ENCODE measurements at regions of chr16 and their contacts with region 1.

Region 1: DNA sequence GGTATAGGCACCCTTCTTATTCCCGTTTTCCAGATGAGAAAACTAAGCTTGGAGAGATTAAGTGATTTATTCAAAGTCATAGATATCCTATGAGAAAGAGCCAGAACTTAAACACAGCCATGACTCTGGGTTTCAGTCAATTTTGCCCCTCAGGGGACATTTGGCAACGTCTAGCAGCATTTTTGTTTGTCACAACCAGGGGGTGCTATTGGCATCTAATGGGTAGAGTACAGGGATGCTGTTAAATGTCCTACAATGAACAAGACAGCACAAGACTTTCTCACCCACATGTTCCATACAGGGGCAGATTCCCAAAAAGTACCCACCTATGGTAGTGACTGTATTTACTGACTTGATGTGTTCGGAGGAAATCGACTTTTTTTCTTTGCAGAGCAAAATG is 4.8 kb upstream of the SHISA9 start:
- DNase-seq: no peak
- H3K4me3 ChIP-seq: no peak overlapping the region
- H3K27ac ChIP-seq: no peak overlapping the region
- H3K4me1 ChIP-seq: no peaks in the 10 kb centered on the region
- H3K27me3 ChIP-seq: peaks cover 40% of the 10 kb centered on the region
- CTCF ChIP-seq: peak in 4 of 5 experiments; percentile 24 to 50 (median 28)
- EP300 ChIP-seq: no peak
- POLR2A ChIP-seq: no peak

Region 2: DNA sequence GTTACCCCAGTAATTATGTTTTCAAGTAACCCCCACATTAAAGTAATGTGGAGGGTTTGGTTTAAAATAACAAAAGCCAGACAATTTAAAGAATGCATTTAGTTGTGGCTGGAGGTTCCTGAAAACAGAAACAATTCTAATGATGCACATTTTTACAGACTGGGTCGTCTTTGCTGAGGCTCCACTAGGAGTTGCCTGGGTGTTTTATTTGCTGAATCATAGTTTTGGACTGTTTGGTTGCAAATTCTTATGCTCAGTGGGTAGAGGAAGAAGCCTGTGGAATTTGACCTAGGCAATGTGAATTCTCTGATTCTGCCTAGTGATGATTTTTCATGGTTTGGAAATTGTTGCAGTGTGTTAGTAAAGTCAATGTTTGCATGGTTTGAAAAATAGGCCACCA is 21.1 kb after region 1 on chr16:
- in situ Hi-C with region 1: no loop called
- intact Hi-C with region 1: no loop called
- DNase-seq: no peak
- H3K4me3 ChIP-seq: no peak overlapping the region
- H3K27ac ChIP-seq: no peak overlapping the region
- H3K4me1 ChIP-seq: no peaks in the 10 kb centered on the region
- H3K27me3 ChIP-seq: no peaks in the 10 kb centered on the region
- CTCF ChIP-seq: no peak
- EP300 ChIP-seq: no peak
- POLR2A ChIP-seq: no peak

Region 3: DNA sequence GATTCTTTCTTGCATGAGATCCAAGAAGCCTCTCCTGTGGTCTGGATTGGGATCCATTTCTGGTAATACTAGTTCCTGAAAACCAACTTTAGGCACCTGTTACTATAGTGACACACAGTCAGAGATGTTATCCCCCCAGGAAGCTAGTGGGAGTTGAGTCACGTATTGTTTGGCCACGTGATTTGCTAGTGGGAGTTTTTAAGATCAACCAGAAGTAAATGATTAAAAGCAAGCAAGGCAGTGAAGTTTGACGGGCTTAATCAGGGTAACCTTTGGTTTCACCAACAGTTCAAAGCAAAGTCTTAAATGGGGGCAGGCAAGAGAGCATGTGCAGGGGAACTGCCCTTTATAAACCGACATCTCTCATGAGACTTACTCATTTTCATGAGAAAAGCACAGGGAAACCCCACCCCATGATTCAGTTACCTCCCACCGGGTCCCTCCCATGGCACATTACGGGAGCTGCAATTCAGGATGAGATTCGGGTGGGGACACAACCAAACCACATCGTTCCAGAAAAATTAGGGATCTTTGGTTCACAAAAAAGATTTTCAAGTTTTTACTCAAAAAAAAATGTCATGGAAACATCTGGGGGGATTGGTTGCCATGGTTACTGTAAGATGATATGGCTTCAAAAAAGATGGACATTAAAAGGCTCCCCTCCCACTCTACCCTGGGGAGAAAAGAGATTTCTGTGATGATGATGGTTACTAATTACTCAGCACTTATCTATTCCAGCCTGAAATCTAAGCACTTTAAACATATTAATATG is 540.3 kb after region 1 on chr16:
- in situ Hi-C with region 1: loop called in 1 of 4 experiments (anchors 25 kb)
- intact Hi-C with region 1: no loop called
- DNase-seq: no peak
- H3K4me3 ChIP-seq: no peak overlapping the region
- H3K27ac ChIP-seq: no peak overlapping the region
- H3K4me1 ChIP-seq: no peaks in the 10 kb centered on the region
- H3K27me3 ChIP-seq: no peaks in the 10 kb centered on the region
- CTCF ChIP-seq: no peak
- EP300 ChIP-seq: no peak
- POLR2A ChIP-seq: no peak